Panc1 (cell line): ENCODE measurements at regions of chr15 and their contacts with region 1.

Region 1: DNA sequence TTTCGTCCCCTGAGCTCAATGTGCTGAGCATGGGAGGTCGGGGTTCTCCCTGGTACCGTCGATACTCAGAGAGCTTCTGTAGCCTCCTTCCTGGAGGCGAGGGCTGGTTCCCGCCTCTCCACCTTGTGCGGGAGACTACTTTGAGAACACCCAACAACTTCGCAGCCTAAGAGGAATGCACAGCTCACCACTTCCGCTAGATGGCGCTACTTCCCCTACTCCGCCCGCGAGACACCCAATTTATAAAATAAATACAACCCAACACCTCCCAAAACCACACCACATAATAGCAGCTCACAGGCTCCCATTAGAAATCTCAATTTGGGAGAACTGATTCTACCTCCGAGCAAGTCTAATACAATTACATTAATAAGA is 1.2 kb downstream of the RGMA start:
- DNase-seq: peak; percentile 33
- ATAC-seq: peak; percentile 79
- H3K4me3 ChIP-seq: peak overlapping the region; percentile 27 to 47
- H3K27ac ChIP-seq: no peak overlapping the region
- H3K4me1 ChIP-seq: peaks cover 3% of the 10 kb centered on the region; the same call in 1 of the 2 replicates
- H3K27me3 ChIP-seq: peaks cover 49% of the 10 kb centered on the region
- CTCF ChIP-seq: peak; percentile 95

Region 2: GRCh38 chr15:92989470-92989869 is 98.3 kb before region 1 on chr15:
- CTCF ChIA-PET with region 1: interaction called, 11 read pairs
- POLR2A ChIA-PET with region 1: no interaction called
- in situ Hi-C with region 1: no loop called
- intact Hi-C with region 1: no loop called
- DNase-seq: no peak
- ATAC-seq: no peak
- H3K4me3 ChIP-seq: no peak overlapping the region
- H3K27ac ChIP-seq: no peak overlapping the region
- H3K4me1 ChIP-seq: no peaks in the 10 kb centered on the region
- H3K27me3 ChIP-seq: no peaks in the 10 kb centered on the region
- CTCF ChIP-seq: no peak

Region 3: GRCh38 chr15:93040288-93041158 is 47.3 kb before region 1 on chr15:
- CTCF ChIA-PET with region 1: no interaction called
- POLR2A ChIA-PET with region 1: no interaction called
- in situ Hi-C with region 1: no loop called
- intact Hi-C with region 1: no loop called
- DNase-seq: no peak
- ATAC-seq: no peak
- H3K4me3 ChIP-seq: no peak overlapping the region
- H3K27ac ChIP-seq: no peak overlapping the region
- H3K4me1 ChIP-seq: no peaks in the 10 kb centered on the region; the same call in 1 of the 2 replicates
- H3K27me3 ChIP-seq: no peaks in the 10 kb centered on the region
- CTCF ChIP-seq: no peak

Region 4: DNA sequence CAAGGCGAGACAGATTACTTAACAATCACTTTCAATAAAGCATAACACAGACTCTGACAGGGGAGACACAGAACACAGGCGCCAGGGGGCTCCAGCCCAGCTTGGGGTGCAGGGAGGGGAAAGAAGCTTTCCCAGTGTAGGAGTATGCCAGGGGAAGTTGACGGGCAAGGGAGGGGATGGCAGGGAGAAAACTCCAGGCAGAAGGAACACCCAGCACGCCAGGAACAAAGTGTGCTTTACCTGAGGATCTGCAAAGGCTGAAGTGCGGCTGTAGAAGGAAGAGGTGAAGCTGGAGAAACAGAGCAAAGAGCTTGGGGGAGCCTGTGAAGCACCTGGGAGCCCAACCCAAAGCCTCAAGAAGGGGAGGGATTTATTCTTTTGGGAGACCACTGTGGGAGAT is 10.9 kb before region 1 on chr15:
- CTCF ChIA-PET with region 1: interaction called, 12 read pairs
- POLR2A ChIA-PET with region 1: no interaction called
- in situ Hi-C with region 1: no loop called
- intact Hi-C with region 1: no loop called
- DNase-seq: no peak
- ATAC-seq: no peak
- H3K4me3 ChIP-seq: no peak overlapping the region
- H3K27ac ChIP-seq: no peak overlapping the region
- H3K4me1 ChIP-seq: peaks cover 4% of the 10 kb centered on the region
- H3K27me3 ChIP-seq: peaks cover 29% of the 10 kb centered on the region
- CTCF ChIP-seq: no peak

Region 5: GRCh38 chr15:94119923-94120775 is 1032.3 kb after region 1 on chr15:
- CTCF ChIA-PET with region 1: interaction called, 23 read pairs
- POLR2A ChIA-PET with region 1: no interaction called
- in situ Hi-C with region 1: no loop called
- intact Hi-C with region 1: loop called (anchors 2 kb)
- DNase-seq: peak; percentile 77
- ATAC-seq: peak; percentile 99
- H3K4me3 ChIP-seq: no peak overlapping the region
- H3K27ac ChIP-seq: no peak overlapping the region
- H3K4me1 ChIP-seq: no peaks in the 10 kb centered on the region
- H3K27me3 ChIP-seq: no peaks in the 10 kb centered on the region
- CTCF ChIP-seq: peak; percentile 94